ENCODE measurements at regions of chr17 and their contacts with region 1.

Region 1: GRCh38 chr17:27446569-27447301 is 9.5 kb upstream of the KSR1 start:
- DNase-seq: no peak
- CTCF ChIP-seq: no peak

Region 2: GRCh38 chr17:27396941-27397340 is 49.8 kb before region 1 on chr17:
- in situ Hi-C with region 1: loop called (anchors 10 kb)
- DNase-seq: no peak
- CTCF ChIP-seq: no peak

Measured in GM13977 (cell line).